Ovary (tissue), 10 donors: ENCODE measurements at regions of chr3 and their contacts with region 1.

Region 1: DNA sequence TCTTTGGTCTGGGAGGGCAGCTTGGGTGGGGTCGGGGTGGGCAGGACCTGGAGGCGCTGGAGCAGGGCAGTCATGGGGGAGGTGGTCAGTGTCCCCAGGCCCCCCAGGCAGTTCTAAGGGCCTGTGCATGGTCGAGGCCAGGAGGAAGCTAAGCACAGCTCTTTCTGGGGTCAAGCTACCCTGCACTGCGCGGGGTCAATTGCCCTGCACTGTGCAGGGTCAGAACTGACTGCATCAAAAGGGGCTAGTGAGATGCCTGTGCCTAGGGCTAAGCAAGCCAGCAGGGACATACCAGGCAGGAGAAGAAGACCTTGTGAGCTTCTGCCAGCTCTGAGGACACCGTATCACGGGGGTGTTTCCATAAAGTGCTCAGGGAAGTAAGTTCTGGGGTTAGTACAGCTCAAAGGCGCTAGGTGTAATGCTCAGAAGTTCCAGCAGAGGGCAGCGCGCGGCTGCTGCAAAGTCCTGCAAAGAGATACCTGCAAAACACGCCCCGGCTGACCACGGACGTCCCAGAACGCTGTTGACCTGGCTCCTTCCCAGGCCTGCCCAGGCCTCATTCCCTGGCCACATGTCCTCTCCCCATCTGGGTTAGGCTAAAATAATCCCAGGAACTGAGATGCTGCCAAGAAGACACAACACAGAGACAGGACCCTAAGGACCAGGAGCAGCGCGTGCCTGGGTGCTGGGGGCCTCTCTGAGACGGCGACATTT is 18.8 kb upstream of the IQSEC1 start:
- DNase-seq: peak; percentile 92 to 95 (median 92)
- H3K4me3 ChIP-seq: no peak overlapping the region
- H3K27ac ChIP-seq: peak overlapping the region; percentile 7 to 64
- H3K4me1 ChIP-seq: peaks cover 3% of the 10 kb centered on the region
- H3K27me3 ChIP-seq: no peaks in the 10 kb centered on the region
- CTCF ChIP-seq: peak; percentile 93 to 94 (median 94)
- EP300 ChIP-seq: no peak
- POLR2A ChIP-seq: no peak

Region 2: DNA sequence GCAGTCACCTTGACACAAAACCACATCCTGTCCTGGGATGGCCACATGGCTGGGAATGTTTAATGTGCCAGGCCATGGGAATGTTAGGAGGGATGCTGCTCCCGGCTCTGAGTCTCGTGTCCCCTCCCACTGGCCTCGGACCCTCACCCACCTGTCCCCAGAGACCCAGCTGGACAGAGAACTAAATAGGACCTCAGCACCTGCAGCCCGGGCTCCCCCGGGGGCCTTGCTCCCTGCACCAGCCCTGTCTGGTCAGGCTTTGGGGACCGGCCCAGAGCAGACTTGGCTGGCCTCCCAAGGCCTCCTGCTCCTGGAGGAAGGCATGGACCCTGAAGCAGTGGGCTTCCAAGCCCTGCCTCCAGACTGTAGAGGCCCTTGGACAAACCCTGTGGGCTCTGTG is 81.1 kb after region 1 on chr3:
- intact Hi-C with region 1: no loop called
- DNase-seq: peak in 1 of 5 donors; percentile 30
- H3K4me3 ChIP-seq: no peak overlapping the region
- H3K27ac ChIP-seq: no peak overlapping the region
- H3K4me1 ChIP-seq: no peaks in the 10 kb centered on the region
- H3K27me3 ChIP-seq: no peaks in the 10 kb centered on the region
- CTCF ChIP-seq: no peak
- EP300 ChIP-seq: no peak
- POLR2A ChIP-seq: no peak

Region 3: DNA sequence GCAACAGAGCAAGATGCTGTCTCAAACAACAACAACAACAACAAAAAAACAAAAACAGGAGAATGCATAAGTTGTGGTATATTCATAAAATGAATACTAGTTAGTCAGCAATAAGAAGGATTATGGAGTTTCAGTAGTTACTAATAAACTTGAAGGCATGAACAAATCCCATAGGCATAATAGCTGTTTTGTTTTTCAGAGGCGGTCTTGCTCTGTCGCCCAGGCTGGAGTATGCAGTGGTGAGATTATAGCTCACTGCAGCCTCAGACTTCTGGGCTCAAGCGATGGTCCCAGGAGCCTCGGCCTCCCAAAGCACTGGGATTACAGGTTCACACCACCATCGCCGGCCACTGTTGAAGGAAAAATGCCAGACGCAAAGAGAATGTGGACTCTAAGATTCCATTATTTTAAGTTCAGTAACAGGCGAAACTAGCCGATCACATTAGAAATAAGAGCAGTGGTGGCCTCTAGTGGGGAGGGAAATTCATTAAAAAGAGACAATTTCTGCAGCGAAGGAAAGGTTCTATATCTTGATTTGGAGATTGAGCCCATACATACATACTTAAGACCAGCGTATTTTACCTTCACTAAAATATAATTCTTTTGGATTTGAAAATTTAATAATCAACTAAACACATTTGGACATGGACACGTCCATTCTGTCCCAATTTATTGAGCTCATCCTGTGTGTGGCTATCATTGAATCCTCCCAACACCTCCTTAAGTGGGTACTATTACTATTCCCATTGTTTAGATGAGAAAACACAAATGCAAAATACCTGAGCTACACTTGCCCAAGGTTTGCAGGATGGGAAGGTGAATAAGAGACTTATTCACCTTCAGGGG is 360.7 kb after region 1 on chr3:
- intact Hi-C with region 1: loop called (anchors 2 to 5 kb)
- DNase-seq: peak in 4 of 5 donors; percentile 13 to 43 (median 26)
- H3K4me3 ChIP-seq: peak overlapping the region; percentile 42
- H3K27ac ChIP-seq: peak overlapping the region in 1 of 2 donors; percentile 68
- H3K4me1 ChIP-seq: peaks cover 4% of the 10 kb centered on the region
- H3K27me3 ChIP-seq: no peaks in the 10 kb centered on the region
- CTCF ChIP-seq: peak; percentile 35 to 66 (median 53)
- EP300 ChIP-seq: no peak
- POLR2A ChIP-seq: no peak

Region 4: DNA sequence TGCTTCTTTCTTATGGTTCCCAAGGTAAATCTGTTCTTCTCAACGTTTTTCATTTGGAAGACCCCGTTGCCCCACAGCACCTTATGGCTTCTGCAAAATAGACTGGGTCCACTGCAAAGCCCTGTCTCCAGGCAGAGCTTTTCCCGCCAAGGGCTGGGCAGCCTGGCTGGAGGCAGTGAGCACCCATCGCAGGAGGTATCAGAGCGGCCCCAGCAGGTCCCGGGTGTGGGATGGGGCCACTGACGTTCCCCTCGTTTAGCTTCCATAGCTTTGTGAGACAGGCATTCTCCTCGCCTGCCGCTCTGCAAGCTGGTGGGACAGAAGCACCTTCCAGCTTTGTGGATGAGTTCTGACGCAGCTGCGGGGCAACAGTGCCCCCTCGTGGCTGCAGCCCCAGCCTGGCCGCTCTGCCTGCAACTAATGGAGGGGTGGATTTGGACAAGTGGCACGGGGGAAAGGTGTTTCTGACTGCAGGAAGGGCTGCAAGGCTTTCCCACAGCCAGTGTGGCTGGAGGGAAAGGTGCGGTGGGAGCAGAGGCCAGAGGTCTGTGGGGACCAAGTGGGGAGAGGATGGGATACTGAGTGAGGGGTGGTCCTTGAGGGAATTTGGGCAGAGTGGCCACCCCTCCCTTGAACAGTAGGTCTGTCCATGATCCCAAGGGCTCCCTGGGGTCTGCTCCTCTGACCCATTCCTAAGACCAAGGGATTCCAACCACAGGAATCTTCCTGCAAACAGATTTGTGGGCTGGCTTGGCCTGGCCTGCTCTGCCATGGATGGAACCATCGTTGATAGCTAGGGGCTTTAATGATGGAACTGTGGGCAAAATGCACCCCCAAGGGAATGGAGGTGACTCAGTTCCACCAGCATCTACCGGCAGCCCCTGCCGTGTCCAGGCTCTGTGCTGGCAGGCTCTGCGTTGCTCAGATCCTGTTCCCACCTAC is 556.3 kb after region 1 on chr3:
- intact Hi-C with region 1: loop called in 3 of 4 experiments (anchors 2 to 5 kb)
- DNase-seq: peak; percentile 67 to 89 (median 80)
- H3K4me3 ChIP-seq: no peak overlapping the region
- H3K27ac ChIP-seq: no peak overlapping the region
- H3K4me1 ChIP-seq: peaks cover 3% of the 10 kb centered on the region
- H3K27me3 ChIP-seq: no peaks in the 10 kb centered on the region
- CTCF ChIP-seq: peak; percentile 77 to 86 (median 81)
- EP300 ChIP-seq: no peak
- POLR2A ChIP-seq: peak; percentile 17

Region 5: GRCh38 chr3:13657660-13658435 is 565.8 kb after region 1 on chr3:
- intact Hi-C with region 1: loop called in 1 of 4 experiments (anchors 5 kb)
- DNase-seq: peak in 3 of 5 donors; percentile 33 to 59 (median 51)
- H3K4me3 ChIP-seq: no peak overlapping the region
- H3K27ac ChIP-seq: no peak overlapping the region
- H3K4me1 ChIP-seq: no peaks in the 10 kb centered on the region
- H3K27me3 ChIP-seq: no peaks in the 10 kb centered on the region
- CTCF ChIP-seq: peak in 2 of 3 donors; percentile 37 to 39
- EP300 ChIP-seq: no peak
- POLR2A ChIP-seq: no peak